ENCODE measurements at regions of chr17 and their contacts with region 1.

Region 1: GRCh38 chr17:45307290-45308015 is 9.4 kb downstream of the MAP3K14 start:
- DNase-seq: no peak
- H3K4me3 ChIP-seq: no peak overlapping the region
- H3K27ac ChIP-seq: peak overlapping the region; percentile 48 to 98; a peak in 3 of 4 replicates
- H3K4me1 ChIP-seq: peaks cover 27 to 48% of the 10 kb centered on the region in 2 experiments
- H3K27me3 ChIP-seq: no peaks in the 10 kb centered on the region
- CTCF ChIP-seq: no peak
- EP300 ChIP-seq: peak in 1 of 2 experiments; percentile 68; a peak in 2 of 4 replicates
- RAD21 ChIP-seq: no peak

Region 2: GRCh38 chr17:45143767-45144198 is 163.7 kb before region 1 on chr17:
- CTCF ChIA-PET with region 1: no interaction called
- POLR2A ChIA-PET with region 1: no interaction called
- DNase-seq: peak; percentile 17
- H3K4me3 ChIP-seq: no peak overlapping the region
- H3K27ac ChIP-seq: no peak overlapping the region
- H3K4me1 ChIP-seq: peaks cover 8 to 11% of the 10 kb centered on the region in 2 experiments; a peak in 2 of 4 replicates
- H3K27me3 ChIP-seq: no peaks in the 10 kb centered on the region
- CTCF ChIP-seq: no peak
- EP300 ChIP-seq: no peak
- RAD21 ChIP-seq: no peak

Region 3: GRCh38 chr17:45241328-45242011 is 66.0 kb before region 1 on chr17:
- CTCF ChIA-PET with region 1: interaction called, 32 read pairs
- POLR2A ChIA-PET with region 1: no interaction called
- DNase-seq: peak; percentile 88
- H3K4me3 ChIP-seq: peak overlapping the region; percentile 57 to 60
- H3K27ac ChIP-seq: peak overlapping the region in 1 of 2 experiments; percentile 44; a peak in 1 of 4 replicates
- H3K4me1 ChIP-seq: peaks cover 0 to 19% of the 10 kb centered on the region in 2 experiments; a peak in 1 of 4 replicates
- H3K27me3 ChIP-seq: no peaks in the 10 kb centered on the region
- CTCF ChIP-seq: no peak
- EP300 ChIP-seq: no peak
- RAD21 ChIP-seq: no peak

Region 4: GRCh38 chr17:45277216-45277849 is 30.1 kb before region 1 on chr17:
- CTCF ChIA-PET with region 1: interaction called, 41 read pairs
- POLR2A ChIA-PET with region 1: interaction called, 3 read pairs
- DNase-seq: peak; percentile 67
- H3K4me3 ChIP-seq: no peak overlapping the region; a peak in 1 of 4 replicates
- H3K27ac ChIP-seq: peak overlapping the region in 1 of 2 experiments; percentile 63; a peak in 2 of 4 replicates
- H3K4me1 ChIP-seq: peaks cover 6% of the 10 kb centered on the region in 2 experiments; a peak in 2 of 4 replicates
- H3K27me3 ChIP-seq: no peaks in the 10 kb centered on the region
- CTCF ChIP-seq: peak; percentile 71
- EP300 ChIP-seq: no peak
- RAD21 ChIP-seq: peak; percentile 78

Region 5: DNA sequence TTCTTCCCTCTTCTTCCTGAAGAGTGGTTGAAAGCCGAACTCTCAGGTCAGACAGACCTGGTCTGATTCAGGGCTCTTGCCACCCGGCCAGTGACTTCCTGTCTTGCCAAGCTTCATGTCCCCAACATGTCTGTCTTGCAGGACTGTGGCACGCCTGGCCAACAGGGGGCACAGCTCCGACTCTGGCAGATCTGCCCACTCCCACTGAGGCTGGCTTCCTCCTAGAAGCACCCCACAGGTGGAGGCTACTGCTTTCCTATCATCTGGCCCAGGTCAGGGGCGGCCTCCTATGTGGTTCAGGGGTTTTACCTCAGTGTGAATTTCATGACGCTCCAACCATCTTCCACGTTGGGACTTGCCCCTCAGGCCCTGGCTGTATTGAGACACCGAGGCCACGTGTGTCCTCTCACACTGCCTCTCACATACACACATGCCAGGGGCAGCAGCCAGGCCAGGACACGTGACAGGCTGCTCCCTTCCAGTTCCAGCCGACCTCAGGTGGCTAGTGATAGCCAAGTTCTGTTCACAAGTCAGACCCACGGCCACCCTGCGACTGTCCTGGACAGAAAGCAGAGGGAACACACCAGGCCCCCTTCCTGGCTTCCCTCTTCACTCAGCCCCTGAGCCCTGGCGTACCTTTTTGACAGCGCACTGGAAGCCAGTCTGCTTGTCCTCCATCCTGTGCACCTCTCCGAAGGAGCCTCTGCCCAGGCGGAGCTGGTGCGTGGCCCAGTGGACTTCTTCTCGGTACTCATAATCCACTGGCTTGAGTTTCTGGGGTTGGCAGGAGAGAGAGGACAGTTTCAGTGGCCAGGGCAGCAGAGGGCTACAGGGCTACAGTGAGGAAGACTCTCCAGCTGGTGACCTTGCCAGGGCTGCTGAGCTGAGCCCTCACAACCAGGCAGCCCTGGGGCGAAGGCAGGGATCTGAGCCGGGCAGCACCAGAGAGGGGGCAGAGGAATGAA is 23.0 kb before region 1 on chr17:
- CTCF ChIA-PET with region 1: interaction called, 41 read pairs
- POLR2A ChIA-PET with region 1: interaction called, 3 read pairs
- DNase-seq: no peak
- H3K4me3 ChIP-seq: no peak overlapping the region
- H3K27ac ChIP-seq: no peak overlapping the region; a peak in 1 of 4 replicates
- H3K4me1 ChIP-seq: peaks cover 0 to 36% of the 10 kb centered on the region in 2 experiments; a peak in 2 of 4 replicates
- H3K27me3 ChIP-seq: no peaks in the 10 kb centered on the region
- CTCF ChIP-seq: peak; percentile 42
- EP300 ChIP-seq: no peak
- RAD21 ChIP-seq: peak; percentile 24; the same call in 1 of the 2 replicates

Region 6: GRCh38 chr17:45293413-45294211 is 13.8 kb before region 1 on chr17:
- CTCF ChIA-PET with region 1: interaction called, 13 read pairs
- POLR2A ChIA-PET with region 1: interaction called, 3 read pairs
- DNase-seq: no peak
- H3K4me3 ChIP-seq: peak overlapping the region in 1 of 2 experiments; percentile 0; a peak in 1 of 4 replicates
- H3K27ac ChIP-seq: peak overlapping the region; percentile 94 to 95
- H3K4me1 ChIP-seq: peaks cover 57 to 78% of the 10 kb centered on the region in 2 experiments
- H3K27me3 ChIP-seq: no peaks in the 10 kb centered on the region
- CTCF ChIP-seq: peak; percentile 36
- EP300 ChIP-seq: peak in 1 of 2 experiments; percentile 89; a peak in 2 of 4 replicates
- RAD21 ChIP-seq: no peak

Region 7: DNA sequence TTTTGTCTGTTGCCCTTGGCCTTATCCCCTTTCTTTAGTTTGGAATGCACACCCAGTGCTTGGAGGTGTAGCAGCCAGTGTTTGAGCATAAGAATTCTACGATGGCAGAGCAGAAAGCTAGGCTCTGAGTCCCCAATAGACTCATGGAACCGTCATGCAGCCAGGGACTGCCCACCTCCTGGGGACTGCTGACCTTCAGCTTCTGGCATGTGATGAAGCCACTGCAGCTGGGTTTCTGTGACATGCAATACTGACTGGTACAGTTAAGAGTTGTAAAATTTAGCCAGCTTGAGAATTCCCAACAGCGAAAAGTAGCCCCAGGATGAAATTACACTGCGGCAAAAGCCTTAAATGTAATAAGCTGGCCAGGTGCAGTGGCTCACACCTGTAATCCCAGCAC is 18.4 kb after region 1 on chr17:
- CTCF ChIA-PET with region 1: no interaction called
- POLR2A ChIA-PET with region 1: no interaction called
- DNase-seq: no peak
- H3K4me3 ChIP-seq: no peak overlapping the region
- H3K27ac ChIP-seq: no peak overlapping the region
- H3K4me1 ChIP-seq: peaks cover 4 to 11% of the 10 kb centered on the region in 2 experiments; a peak in 3 of 4 replicates
- H3K27me3 ChIP-seq: no peaks in the 10 kb centered on the region
- CTCF ChIP-seq: no peak
- EP300 ChIP-seq: no peak
- RAD21 ChIP-seq: no peak

Measured in SK-N-SH (cell line).